ENCODE measurements at regions of chr2 and their contacts with region 1.

Region 1: GRCh38 chr2:218269899-218270720 is at the starts of genes AAMP and PNKD:
- DNase-seq: peak; percentile 100
- H3K4me3 ChIP-seq: peak within 1 kb of the TSS; percentile 87 to 92 (median 88)
- H3K27ac ChIP-seq: peak within 1 kb of the TSS; percentile 65
- H3K4me1 ChIP-seq: peaks cover 19% of the 10 kb centered on the region
- H3K27me3 ChIP-seq: no peaks in the 10 kb centered on the region
- CTCF ChIP-seq: no peak
- POLR2A ChIP-seq: peak; percentile 83
- total RNA-seq, gene AAMP: 59.7 and 69.3 TPM in 2 replicates
- total RNA-seq, gene PNKD: 56.1 and 56.6 TPM in 2 replicates

Region 2: DNA sequence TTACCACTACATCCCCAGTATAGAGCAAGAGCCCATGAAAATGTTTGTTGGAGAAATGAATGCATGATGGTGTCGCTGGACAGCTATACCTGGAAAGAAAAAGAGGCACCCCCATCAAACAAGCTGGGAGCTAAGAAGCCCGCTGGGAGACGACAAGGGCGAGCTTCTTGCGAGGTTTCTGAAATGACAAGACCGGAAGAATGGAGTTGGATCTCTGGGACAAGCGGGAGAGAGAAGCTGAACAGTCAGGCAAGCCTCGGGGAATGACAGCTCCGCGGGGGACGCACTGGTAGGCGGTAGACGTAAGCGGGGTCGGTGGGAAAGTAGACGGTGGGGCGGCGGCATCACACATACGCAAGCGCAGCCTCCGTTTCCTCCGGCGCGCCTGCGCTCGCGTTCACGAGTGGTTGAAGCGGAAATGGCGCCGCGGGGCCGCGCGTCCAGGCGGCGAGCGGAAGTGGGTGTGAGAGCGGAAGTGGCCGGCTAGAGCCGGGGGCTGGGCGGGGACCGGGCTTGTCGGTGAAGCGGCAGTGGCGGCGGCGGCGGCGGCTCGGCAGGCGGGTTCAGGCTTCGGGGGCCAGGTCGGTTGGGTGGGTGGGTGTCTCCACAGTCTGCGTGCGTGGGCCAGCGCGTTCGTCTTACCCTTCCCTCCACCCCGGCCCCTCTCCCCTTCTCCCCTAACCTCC is 53.3 kb before region 1 on chr2 and contains the start of gene ARPC2:
- CTCF ChIA-PET with region 1: no interaction called
- POLR2A ChIA-PET with region 1: interaction called, 3 read pairs
- dilution Hi-C with region 1: no loop called
- intact Hi-C with region 1: loop called (anchors 1 kb)
- DNase-seq: peak; percentile 97
- H3K4me3 ChIP-seq: peak within 1 kb of the TSS; percentile 81 to 96 (median 88)
- H3K27ac ChIP-seq: peak within 1 kb of the TSS; percentile 70
- H3K4me1 ChIP-seq: peaks cover 32% of the 10 kb centered on the region
- H3K27me3 ChIP-seq: peaks cover 0 to under 1% of the 10 kb centered on the region in 2 experiments
- CTCF ChIP-seq: no peak
- POLR2A ChIP-seq: peak; percentile 89
- total RNA-seq, gene ARPC2: 455 and 483 TPM in 2 replicates

Region 3: GRCh38 chr2:218238887-218239286 is 31.2 kb before region 1 on chr2:
- CTCF ChIA-PET with region 1: no interaction called
- POLR2A ChIA-PET with region 1: no interaction called
- dilution Hi-C with region 1: no loop called
- intact Hi-C with region 1: no loop called
- DNase-seq: no peak
- H3K4me3 ChIP-seq: no peak overlapping the region
- H3K27ac ChIP-seq: no peak overlapping the region
- H3K4me1 ChIP-seq: no peaks in the 10 kb centered on the region
- H3K27me3 ChIP-seq: no peaks in the 10 kb centered on the region
- CTCF ChIP-seq: no peak
- POLR2A ChIP-seq: no peak

Region 4: GRCh38 chr2:218292048-218293014 is 22.2 kb after region 1 on chr2 and contains the start of gene TMBIM1:
- CTCF ChIA-PET with region 1: interaction called, 51 read pairs
- POLR2A ChIA-PET with region 1: interaction called, 6 read pairs
- dilution Hi-C with region 1: no loop called
- intact Hi-C with region 1: loop called (anchors 1 kb)
- DNase-seq: peak; percentile 69
- H3K4me3 ChIP-seq: peak within 1 kb of the TSS; percentile 69 to 79 (median 74)
- H3K27ac ChIP-seq: peak within 1 kb of the TSS; percentile 63
- H3K4me1 ChIP-seq: peaks cover 63% of the 10 kb centered on the region
- H3K27me3 ChIP-seq: no peaks in the 10 kb centered on the region
- CTCF ChIP-seq: peak; percentile 61 to 97
- POLR2A ChIP-seq: peak; percentile 68
- total RNA-seq, gene TMBIM1: 141 and 159 TPM in 2 replicates

Region 5: DNA sequence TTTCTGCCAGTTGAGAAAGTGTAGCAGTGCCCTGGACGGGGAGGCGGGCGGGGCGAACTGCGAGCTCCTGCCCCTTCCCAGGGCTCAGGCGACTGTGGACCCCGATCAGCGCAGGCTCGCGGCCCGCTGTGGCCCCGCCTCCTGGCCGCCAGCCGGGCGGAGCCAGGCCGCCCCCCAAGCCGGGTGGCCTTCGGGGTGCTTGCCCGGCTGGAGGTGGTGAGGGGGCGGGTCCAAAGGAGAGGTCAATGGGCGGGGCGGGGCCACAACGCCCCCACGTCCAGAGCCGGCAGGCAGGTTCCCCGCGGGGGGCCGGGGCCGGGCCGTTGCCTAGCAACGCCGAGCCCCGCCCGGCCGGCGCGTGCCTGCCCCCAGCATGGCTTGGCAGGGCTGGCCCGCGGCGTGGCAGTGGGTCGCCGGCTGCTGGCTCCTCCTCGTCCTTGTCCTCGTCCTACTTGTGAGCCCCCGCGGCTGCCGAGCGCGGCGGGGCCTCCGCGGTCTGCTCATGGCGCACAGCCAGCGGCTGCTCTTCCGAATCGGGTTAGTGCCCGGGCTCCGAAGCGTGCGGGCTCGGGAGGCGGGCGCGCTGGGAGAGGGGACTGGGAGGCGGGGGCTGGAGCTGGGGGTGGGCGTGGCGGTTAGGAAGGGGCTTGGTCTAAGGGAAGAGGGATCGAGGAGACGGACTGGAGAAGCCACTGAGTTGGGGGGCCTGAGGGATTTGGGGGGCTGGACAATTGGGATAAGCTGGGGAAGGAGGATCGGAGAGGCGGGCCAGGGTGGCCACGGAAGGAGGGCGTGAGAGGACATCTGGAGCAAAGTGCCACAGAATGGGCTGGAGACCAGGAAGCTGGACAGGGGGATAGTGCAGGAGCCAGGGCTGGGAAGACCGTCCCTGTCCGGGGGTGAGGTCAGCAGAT is 53.0 kb after region 1 on chr2:
- CTCF ChIA-PET with region 1: interaction called, 4 read pairs
- POLR2A ChIA-PET with region 1: no interaction called
- dilution Hi-C with region 1: no loop called
- intact Hi-C with region 1: loop called (anchors 2 kb)
- DNase-seq: peak; percentile 95
- H3K4me3 ChIP-seq: peak overlapping the region; percentile 49 to 71 (median 67)
- H3K27ac ChIP-seq: peak overlapping the region; percentile 91
- H3K4me1 ChIP-seq: peaks cover 24% of the 10 kb centered on the region
- H3K27me3 ChIP-seq: no peaks in the 10 kb centered on the region
- CTCF ChIP-seq: no peak
- POLR2A ChIP-seq: no peak

Region 6: DNA sequence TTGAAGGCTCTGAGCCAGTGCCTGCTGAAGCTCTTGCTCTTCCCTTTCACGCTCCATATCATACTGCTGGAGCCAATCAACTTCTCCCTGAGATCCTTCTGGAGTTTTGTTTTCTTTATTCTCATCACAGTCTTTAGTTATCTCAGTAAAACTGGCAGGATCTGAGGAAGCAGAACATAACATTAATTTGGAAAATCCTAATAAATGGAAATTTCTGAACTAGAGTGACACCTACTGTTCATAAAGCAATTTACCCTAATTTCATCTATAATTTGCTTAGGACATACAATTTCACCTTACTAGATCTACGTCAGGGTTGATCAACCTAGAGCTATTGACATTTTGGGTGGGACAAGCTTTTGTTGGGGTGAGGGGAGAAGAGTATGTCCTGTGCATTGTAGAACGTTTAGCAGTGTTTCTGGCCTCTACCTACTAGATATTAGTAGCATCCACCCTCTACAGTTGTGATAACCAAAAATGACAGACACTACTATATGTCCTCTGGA is 196.0 kb after region 1 on chr2:
- CTCF ChIA-PET with region 1: interaction called, 3 read pairs
- POLR2A ChIA-PET with region 1: no interaction called
- dilution Hi-C with region 1: no loop called
- intact Hi-C with region 1: loop called (anchors 1 kb)
- DNase-seq: peak; percentile 52
- H3K4me3 ChIP-seq: no peak overlapping the region
- H3K27ac ChIP-seq: no peak overlapping the region
- H3K4me1 ChIP-seq: no peaks in the 10 kb centered on the region
- H3K27me3 ChIP-seq: no peaks in the 10 kb centered on the region
- CTCF ChIP-seq: peak in 1 of 2 donors; percentile 23
- POLR2A ChIP-seq: no peak

Region 7: GRCh38 chr2:218648088-218648786 is 378.1 kb after region 1 on chr2:
- CTCF ChIA-PET with region 1: no interaction called
- POLR2A ChIA-PET with region 1: no interaction called
- dilution Hi-C with region 1: no loop called
- intact Hi-C with region 1: loop called (anchors 5 kb)
- DNase-seq: peak; percentile 75
- H3K4me3 ChIP-seq: no peak overlapping the region
- H3K27ac ChIP-seq: no peak overlapping the region
- H3K4me1 ChIP-seq: peaks cover 6% of the 10 kb centered on the region
- H3K27me3 ChIP-seq: no peaks in the 10 kb centered on the region
- CTCF ChIP-seq: peak; percentile 81 to 91
- POLR2A ChIP-seq: no peak

Region 8: GRCh38 chr2:219073413-219074129 is 803.5 kb after region 1 on chr2:
- CTCF ChIA-PET with region 1: no interaction called
- POLR2A ChIA-PET with region 1: no interaction called
- dilution Hi-C with region 1: no loop called
- intact Hi-C with region 1: no loop called
- DNase-seq: peak; percentile 23
- H3K4me3 ChIP-seq: no peak overlapping the region
- H3K27ac ChIP-seq: no peak overlapping the region
- H3K4me1 ChIP-seq: no peaks in the 10 kb centered on the region
- H3K27me3 ChIP-seq: no peaks in the 10 kb centered on the region
- CTCF ChIP-seq: peak; percentile 60 to 65
- POLR2A ChIP-seq: no peak